Posterior cingulate gyrus (tissue), 11 donors: ENCODE measurements at regions of chr2 and their contacts with region 1.

Region 1: GRCh38 chr2:96816128-96816835 is at the start of gene CNNM3:
- DNase-seq: peak; percentile 93 to 100 (median 97)

Region 2: GRCh38 chr2:95379371-95379831 is 1436.9 kb before region 1 on chr2:
- intact Hi-C with region 1: no loop called
- DNase-seq: peak in 2 of 10 donors; percentile 31 to 71

Region 3: GRCh38 chr2:96726131-96726530 is 90.2 kb before region 1 on chr2:
- intact Hi-C with region 1: no loop called
- DNase-seq: no peak

Region 4: DNA sequence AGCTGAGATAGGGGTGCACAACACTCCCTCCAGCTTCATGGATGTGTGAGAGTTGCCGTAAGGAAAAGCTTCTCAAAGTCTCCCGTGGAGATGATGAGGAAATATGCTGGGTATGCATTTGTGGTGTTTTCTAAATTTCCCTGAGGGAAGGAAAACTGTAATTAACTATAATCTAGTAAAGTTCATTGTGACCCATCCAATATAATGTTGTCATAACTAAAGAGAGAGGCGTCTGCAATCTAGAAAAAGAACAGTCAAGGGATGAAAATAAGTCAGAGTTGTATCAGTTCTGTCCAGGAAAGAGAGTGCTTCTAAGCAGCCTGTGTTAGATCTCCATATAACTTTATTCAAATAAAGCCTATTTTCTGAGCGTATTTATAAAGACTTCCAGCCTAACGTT is 69.1 kb before region 1 on chr2:
- intact Hi-C with region 1: no loop called
- DNase-seq: peak in 1 of 10 donors; percentile 1

Region 5: DNA sequence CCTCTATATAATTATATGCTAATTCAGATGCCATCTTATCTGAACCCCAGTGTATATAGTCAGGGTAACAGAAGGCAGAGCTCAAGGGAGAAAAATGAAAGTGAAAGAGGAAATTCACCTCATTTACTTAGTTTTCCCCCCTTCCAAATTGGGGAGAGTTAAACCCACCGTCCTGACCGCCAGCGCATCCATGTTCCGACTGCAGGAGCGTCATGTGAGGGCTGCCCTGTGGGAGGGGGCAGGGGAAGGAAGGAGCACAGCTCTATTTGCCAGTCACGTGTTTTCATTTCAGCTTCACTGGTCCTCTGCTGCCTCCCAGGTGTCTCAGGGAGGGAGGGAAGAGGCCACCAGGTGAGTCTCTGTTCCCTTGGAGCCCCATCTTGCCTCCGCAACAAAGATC is 42.4 kb before region 1 on chr2:
- intact Hi-C with region 1: no loop called
- DNase-seq: no peak

Region 6: DNA sequence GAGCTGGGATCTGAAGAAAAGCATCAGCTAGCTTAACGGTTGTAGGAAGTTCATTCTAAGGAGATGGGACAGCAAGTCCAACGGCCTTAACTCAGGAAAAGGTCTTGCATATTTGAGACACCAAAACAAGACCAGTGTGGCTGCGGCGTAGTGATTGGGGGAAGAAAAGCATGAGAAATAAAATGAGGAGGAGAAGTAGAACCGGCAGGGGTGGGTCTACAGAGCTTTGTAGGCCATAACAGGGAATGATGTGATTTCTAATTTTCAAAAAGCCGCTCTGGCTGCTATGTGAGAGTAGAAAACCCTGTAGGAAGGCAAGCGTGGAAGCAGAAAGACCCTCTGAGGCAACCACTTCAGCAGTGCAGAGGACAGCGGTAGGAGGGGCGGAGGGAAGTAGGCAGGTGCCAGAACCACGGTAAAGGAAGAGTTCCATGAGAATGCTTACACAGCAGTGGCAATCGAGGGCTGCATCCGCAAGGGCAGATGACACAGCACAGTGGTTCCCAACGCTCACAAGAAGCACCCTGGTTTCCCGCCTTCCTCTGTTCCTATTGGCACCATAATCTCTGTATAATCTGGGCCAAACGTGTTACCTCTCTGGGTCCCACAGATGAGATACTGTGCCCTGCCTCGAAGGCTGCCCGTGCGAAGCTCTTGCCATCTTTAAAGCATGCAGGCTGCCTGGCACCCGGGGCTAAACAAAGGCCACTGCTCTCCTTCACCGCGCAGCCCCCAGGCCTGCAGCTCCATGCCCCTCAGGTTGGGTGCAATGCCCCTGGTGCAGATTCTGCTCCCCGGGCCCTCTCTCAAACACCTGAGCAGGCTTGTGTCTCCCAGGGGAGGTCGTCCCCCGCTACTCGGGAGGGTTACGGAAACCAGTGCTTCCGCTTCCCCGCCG is 40.7 kb after region 1 on chr2:
- intact Hi-C with region 1: loop called (anchors 1 kb)
- DNase-seq: peak in 1 of 10 donors; percentile 74

Region 7: GRCh38 chr2:96960153-96960961 is 144.1 kb after region 1 on chr2:
- intact Hi-C with region 1: loop called (anchors 2 kb)
- DNase-seq: peak; percentile 72 to 98 (median 94)